A673 (cell line): ENCODE measurements at regions of chr2 and their contacts with region 1.

Region 1: GRCh38 chr2:142682528-142682927 is 194.9 kb upstream of the KYNU start:
- DNase-seq: peak; percentile 35
- H3K4me3 ChIP-seq: no peak overlapping the region
- H3K27ac ChIP-seq: no peak overlapping the region
- H3K4me1 ChIP-seq: no peaks in the 10 kb centered on the region
- H3K27me3 ChIP-seq: no peaks in the 10 kb centered on the region
- CTCF ChIP-seq: peak; percentile 42; the same call in 1 of the 2 replicates

Region 2: DNA sequence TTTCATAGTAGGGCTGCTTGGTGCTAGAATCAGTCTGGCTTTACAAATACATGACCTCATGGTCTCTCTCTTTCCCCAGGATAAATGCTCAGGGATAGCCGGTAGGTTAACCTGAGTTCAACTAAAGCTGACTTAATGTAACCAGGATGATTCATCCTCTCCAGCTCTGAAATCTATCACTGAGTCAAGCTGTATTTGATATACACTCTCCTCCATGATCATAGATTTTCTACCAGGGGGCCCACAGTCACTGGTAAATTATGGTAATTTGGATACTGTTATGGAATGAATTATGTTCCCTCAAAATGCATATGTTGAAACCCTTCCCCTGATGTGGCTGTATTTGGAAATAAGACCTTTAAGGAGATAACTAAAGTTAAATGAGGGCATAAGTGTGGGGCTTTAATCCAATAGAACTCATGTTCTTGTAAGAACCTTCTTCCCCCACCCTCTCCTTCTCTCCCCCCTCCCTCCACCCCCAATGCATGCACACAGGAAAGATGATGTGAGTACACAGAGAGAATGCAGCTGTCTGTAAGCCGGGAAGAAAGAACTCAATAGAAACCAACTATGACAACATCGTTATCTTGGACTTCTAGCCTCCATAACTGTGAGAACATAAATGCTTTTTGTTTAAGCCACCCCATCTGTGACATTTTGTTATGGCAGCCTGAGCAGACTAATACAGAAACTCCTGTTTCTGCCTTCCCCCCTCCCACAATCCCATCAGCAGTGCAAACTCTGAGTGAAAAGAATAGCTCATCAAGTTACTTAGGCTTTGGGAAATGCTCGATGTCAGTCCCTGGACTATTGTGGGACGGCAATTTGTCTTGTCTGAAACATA is 60.1 kb after region 1 on chr2:
- CTCF ChIA-PET with region 1: no interaction called
- POLR2A ChIA-PET with region 1: no interaction called
- intact Hi-C with region 1: no loop called
- DNase-seq: no peak
- H3K4me3 ChIP-seq: no peak overlapping the region
- H3K27ac ChIP-seq: no peak overlapping the region
- H3K4me1 ChIP-seq: no peaks in the 10 kb centered on the region
- H3K27me3 ChIP-seq: no peaks in the 10 kb centered on the region
- CTCF ChIP-seq: no peak

Region 3: DNA sequence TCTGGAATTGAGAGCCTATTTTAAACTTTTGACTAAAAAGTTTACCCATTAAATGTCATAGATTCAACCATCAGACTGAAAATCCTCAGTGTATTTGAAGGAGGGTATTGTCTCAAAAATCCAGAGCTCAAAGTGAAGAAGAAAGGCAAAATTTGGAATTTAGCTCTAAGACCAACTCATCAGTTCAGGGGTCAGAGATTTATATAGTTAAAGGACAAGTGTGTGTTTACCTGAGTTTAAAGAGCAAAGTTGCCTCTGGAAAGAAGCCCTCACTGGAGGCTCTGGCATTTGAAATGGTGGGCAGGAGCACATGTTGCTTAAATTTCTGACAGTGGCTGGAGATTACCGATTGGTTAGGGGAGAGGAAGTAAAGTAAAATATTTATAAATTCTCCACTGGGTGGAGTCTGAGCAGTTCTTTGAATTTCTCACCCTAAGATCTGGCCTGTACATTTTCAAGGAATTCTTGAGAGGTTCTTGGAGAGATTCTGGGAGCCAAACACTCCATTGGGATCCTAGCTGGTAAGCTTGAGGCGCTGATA is 194.8 kb after region 1 on chr2 and contains the start of gene KYNU:
- CTCF ChIA-PET with region 1: no interaction called
- POLR2A ChIA-PET with region 1: no interaction called
- intact Hi-C with region 1: loop called (anchors 5 kb)
- DNase-seq: peak; percentile 39
- H3K4me3 ChIP-seq: no peak within 1 kb of the TSS
- H3K27ac ChIP-seq: no peak within 1 kb of the TSS
- H3K4me1 ChIP-seq: peaks cover 50% of the 10 kb centered on the region
- H3K27me3 ChIP-seq: no peaks in the 10 kb centered on the region
- CTCF ChIP-seq: 0 out of 2 replicates have a peak, but pooled peaks have one; percentile 18
- total RNA-seq, gene KYNU: 0.44 and 2.5 TPM in 2 replicates

Region 4: GRCh38 chr2:142980561-142981378 is 298.2 kb after region 1 on chr2:
- CTCF ChIA-PET with region 1: no interaction called
- POLR2A ChIA-PET with region 1: no interaction called
- intact Hi-C with region 1: loop called (anchors 1 kb)
- DNase-seq: peak; percentile 63
- H3K4me3 ChIP-seq: no peak overlapping the region
- H3K27ac ChIP-seq: no peak overlapping the region
- H3K4me1 ChIP-seq: peaks cover 6% of the 10 kb centered on the region
- H3K27me3 ChIP-seq: no peaks in the 10 kb centered on the region
- CTCF ChIP-seq: peak; percentile 70